ENCODE measurements at regions of chr15 and their contacts with region 1.

Region 1: GRCh38 chr15:69755551-69756310 is 303.1 kb downstream of the RPLP1 start:
- DNase-seq: peak; percentile 92
- H3K4me3 Mint-ChIP-seq: peak overlapping the region; percentile 52
- H3K27ac Mint-ChIP-seq: peak overlapping the region; percentile 80
- H3K4me1 Mint-ChIP-seq: peaks cover 95% of the 10 kb centered on the region
- H3K27me3 Mint-ChIP-seq: peaks cover 11% of the 10 kb centered on the region

Region 2: DNA sequence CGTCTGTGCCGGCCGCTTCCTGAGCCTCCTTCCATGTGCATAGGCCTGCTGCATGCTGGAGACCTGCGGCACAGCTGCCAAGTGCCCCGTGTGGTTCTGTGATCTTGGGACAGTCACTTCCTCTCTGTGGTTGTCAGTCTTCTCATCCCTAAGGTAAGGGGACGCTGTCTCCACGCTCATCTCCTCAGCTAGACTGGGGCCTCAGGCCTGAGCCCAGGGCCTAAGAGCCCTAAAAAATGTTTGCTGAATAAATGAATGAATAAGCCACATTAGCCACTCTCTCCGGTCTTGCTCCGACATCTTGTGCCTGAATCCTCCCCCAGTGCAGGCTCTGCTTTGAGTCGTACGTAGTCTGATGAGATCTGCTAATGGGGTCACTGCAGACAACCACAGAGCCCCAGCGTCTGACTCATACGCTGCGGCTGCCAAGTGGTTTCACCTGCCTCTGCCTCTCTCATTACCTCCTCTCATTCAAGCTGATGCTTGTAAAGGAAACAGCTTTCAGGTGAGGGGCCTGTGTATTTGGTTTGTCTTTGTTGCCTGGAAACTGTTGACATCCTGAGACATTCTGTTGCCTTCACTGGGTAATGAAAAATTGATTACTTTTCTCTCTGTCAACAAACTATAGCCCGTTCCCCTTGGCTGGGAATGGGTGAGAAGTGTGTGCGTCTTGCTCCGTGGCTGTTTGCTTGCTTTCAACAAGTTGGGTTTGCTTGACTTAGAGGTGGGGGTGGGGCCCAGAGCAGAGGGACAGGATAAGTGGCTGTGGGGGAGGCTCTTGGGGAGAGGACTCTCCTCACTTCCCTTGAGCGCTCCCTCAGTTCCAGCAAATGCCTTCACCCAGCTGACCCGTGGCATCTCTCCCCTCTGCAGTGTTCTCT is 287.2 kb before region 1 on chr15:
- CTCF ChIA-PET with region 1: no interaction called
- POLR2A ChIA-PET with region 1: interaction called, 4 read pairs
- intact Hi-C with region 1: loop called (anchors 1 kb)
- DNase-seq: peak; percentile 92
- H3K4me3 Mint-ChIP-seq: peak overlapping the region; percentile 30
- H3K27ac Mint-ChIP-seq: peak overlapping the region; percentile 83
- H3K4me1 Mint-ChIP-seq: peaks cover 38% of the 10 kb centered on the region
- H3K27me3 Mint-ChIP-seq: no peaks in the 10 kb centered on the region

Region 3: DNA sequence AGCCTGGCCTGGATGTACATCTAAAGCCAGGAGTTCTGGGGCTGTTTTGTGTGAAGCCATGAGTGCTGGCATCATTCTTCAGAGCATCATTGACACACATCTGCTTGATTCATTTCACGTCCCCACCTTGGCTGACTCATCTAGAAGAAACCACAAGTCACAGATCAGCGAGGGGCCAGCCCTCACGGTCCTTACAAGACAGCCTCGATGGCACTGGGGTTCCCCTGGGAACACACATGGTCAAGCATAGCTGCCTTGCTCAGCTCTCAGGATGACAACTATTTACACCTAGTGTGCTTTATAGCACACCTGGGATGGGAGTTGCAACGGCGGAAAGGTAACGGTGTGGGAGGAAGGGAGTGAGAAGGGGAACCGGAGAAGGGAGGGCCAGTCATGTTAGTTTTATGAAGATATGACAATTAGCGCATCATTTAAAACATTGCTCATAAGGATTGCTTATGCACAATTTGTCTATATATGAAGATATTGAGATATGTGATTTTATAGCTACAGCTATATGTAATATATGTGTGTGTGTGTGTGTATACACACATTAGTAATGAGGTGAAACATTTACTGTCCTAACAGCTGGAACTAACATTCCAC is 76.0 kb before region 1 on chr15:
- CTCF ChIA-PET with region 1: no interaction called
- POLR2A ChIA-PET with region 1: interaction called, 4 read pairs
- intact Hi-C with region 1: loop called (anchors 1 kb)
- DNase-seq: peak; percentile 86
- H3K4me3 Mint-ChIP-seq: peak overlapping the region; percentile 34
- H3K27ac Mint-ChIP-seq: peak overlapping the region; percentile 28
- H3K4me1 Mint-ChIP-seq: peaks cover 23% of the 10 kb centered on the region
- H3K27me3 Mint-ChIP-seq: peaks cover 9% of the 10 kb centered on the region

Region 4: DNA sequence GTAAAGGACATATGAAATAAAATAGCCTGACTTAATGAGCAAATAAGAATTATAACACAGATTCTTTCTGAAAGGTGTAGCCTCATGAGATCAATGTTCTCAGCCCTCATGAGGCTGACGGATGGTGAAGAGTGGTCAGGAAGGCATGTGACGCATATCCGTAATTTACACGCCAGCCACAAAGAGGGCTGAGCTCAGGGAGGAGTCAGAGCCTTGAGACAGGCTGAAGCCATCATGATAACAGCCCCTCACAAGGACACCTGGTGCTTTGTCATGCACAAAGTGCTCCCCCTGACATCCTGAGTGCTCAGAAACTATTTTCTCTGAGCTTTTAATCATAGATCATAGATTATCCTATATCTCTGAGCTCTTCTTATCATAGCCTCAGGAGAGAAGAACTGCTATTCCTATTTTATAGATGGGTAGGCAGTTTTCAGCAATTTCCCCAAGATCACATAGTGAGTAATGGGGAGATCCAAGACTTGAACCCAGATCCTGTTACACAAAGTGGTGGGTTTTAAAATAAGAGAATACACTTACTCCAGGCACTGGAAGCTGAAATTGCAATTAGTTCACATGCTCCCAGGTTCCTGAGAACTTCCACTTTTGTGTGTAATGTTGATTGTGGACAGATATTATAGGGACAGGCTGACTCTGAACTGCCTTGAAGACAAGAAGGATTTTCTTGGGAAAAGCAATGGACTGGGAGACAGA is 36.0 kb before region 1 on chr15:
- CTCF ChIA-PET with region 1: interaction called, 4 read pairs
- POLR2A ChIA-PET with region 1: interaction called, 11 read pairs
- intact Hi-C with region 1: loop called (anchors 1 kb)
- DNase-seq: peak; percentile 83
- H3K4me3 Mint-ChIP-seq: no peak overlapping the region
- H3K27ac Mint-ChIP-seq: peak overlapping the region; percentile 87
- H3K4me1 Mint-ChIP-seq: peaks cover 84% of the 10 kb centered on the region
- H3K27me3 Mint-ChIP-seq: peaks cover 3% of the 10 kb centered on the region

Region 5: GRCh38 chr15:70140543-70141375 is 385.0 kb after region 1 on chr15:
- CTCF ChIA-PET with region 1: no interaction called
- POLR2A ChIA-PET with region 1: interaction called, 4 read pairs
- intact Hi-C with region 1: loop called (anchors 2 kb)
- DNase-seq: peak; percentile 61
- H3K4me3 Mint-ChIP-seq: peak overlapping the region; percentile 7
- H3K27ac Mint-ChIP-seq: peak overlapping the region; percentile 38
- H3K4me1 Mint-ChIP-seq: peaks cover 34% of the 10 kb centered on the region
- H3K27me3 Mint-ChIP-seq: peaks cover 15% of the 10 kb centered on the region

Region 6: DNA sequence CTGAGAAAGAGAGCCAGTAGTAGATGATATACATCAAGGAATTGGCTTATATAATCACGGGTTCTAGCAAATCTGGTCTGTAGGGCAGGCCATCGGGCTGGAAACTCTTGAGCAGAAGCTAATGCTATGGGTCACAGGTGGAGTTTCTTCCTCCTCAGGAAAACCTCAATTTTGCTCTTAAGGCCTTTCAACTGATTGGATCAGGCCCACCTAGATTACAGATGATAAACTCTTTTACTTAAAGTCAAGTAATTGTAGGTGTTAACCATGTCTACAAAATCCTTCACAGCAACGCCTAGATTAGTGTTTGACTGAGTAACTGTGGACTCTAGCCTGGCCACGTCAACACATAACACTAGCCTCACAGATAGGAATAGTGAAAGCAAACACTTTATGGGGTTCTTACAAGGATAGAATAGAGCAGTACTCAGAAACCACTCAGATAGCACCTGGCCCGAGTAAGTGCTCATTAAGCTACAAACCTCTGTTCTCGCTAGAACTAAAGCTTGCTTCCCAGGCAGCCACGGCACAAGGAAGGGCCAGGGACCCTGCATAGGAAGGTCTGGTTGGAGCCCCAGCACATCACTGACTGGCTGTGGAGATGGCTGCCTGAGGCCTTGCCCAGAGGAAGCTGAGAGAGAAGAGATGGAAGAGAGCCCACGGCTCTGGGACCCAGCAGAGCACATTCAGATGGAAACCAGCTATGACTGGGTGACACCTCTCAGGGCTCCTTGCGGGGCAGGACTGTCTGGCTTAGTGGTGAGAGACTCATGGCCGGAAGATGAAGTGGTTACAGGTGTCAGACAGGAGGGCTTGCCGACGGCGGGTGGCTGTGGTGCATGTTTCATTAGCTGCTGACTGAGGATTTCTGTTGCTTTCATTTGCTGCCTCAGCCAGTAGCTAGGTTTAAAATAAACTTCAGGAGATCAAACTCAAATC is 544.5 kb after region 1 on chr15:
- CTCF ChIA-PET with region 1: no interaction called
- POLR2A ChIA-PET with region 1: no interaction called
- intact Hi-C with region 1: loop called (anchors 5 kb)
- DNase-seq: peak; percentile 90
- H3K4me3 Mint-ChIP-seq: no peak overlapping the region
- H3K27ac Mint-ChIP-seq: no peak overlapping the region
- H3K4me1 Mint-ChIP-seq: peaks cover 15% of the 10 kb centered on the region
- H3K27me3 Mint-ChIP-seq: no peaks in the 10 kb centered on the region

Measured in activated CD4-positive, alpha-beta memory T cell treated with anti-CD3 and anti-CD28 coated beads for 36 hours (primary cell).